ENCODE measurements at regions of chr2 and their contacts with region 1.

Region 1: GRCh38 chr2:178804791-178805190 is 2.4 kb downstream of the TTN start:
- DNase-seq: peak; percentile 46

Region 2: GRCh38 chr2:178553047-178553446 is 251.7 kb before region 1 on chr2:
- in situ Hi-C with region 1: no loop called
- DNase-seq: peak; percentile 70

Region 3: DNA sequence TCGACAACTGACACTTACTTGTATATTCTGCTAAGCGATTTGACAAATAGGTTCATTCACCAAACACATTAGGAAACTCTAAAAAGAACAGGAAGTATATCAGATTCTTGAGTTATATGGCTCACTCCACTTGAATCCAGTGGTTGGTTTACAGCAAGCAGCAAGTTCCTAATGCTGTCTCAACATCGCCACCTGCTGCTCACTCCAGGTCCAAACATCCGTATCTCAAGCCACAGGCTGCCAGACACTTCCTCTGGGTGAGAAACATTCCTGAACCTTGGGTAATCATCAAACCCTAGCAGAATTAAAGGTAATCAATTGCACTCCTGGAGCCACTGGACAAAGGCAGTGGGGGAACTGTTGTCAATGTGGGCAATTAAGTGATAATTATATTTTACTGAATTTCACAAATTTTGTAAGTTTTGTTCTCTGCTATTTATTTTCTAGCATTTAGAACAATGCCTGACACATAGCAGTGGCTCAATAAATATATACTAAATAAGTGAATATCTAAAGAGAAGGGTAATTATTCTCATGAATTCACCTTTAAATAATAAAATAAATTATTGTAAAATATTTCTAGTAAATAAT is 109.6 kb after region 1 on chr2:
- in situ Hi-C with region 1: loop called (anchors 25 kb)
- DNase-seq: peak; percentile 80